ENCODE measurements at regions of chr15 and their contacts with region 1.

Region 1: GRCh38 chr15:76139368-76140073 is 79.7 kb downstream of the TMEM266 start:
- H3K4me3 ChIP-seq: no peak overlapping the region
- H3K27ac ChIP-seq: no peak overlapping the region
- H3K4me1 ChIP-seq: no peaks in the 10 kb centered on the region
- CTCF ChIP-seq: peak; percentile 65

Region 2: DNA sequence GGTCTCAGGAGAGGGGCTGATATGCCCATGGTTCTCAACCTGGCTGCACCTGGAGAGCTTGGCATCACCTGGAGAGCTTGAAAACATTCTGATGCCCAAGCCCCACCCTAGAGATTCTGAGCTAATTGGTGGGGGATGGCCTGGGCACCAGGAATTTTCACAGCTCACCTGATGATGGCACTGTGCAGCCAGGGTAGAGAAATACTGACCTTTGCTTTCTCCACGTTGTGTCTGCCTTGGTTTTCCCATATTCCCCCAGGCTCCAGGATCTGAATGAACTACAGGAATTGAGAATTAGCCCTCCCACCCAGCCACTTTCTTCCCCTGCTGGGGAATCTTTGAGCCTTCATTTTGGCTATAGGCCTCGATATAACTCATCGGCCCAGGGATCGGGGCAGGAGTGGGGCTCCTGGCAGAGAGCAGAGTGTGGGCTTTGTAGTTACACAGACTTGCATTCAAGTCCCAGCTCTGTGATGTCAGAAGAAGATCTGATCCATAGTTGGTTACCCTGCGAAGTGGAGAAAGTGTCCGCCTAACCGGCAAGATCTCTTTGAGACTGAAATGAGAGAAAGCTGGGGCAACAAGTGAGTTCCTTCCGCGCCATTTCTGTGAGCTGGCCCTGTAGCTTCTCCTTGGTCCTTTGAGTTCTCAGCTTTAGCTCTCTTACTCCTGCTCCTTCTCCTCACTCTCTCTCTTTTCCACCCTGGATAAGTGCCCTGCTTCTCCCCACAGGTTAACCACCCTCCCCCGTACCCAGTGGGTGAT is 329.4 kb before region 1 on chr15:
- CTCF ChIA-PET with region 1: interaction called, 48 read pairs
- POLR2A ChIA-PET with region 1: interaction called, 3 read pairs
- H3K4me3 ChIP-seq: no peak overlapping the region
- H3K27ac ChIP-seq: no peak overlapping the region
- H3K4me1 ChIP-seq: no peaks in the 10 kb centered on the region
- CTCF ChIP-seq: peak; percentile 42; the same call in 1 of the 2 replicates

Region 3: GRCh38 chr15:76057332-76058000 is 82.1 kb before region 1 on chr15:
- CTCF ChIA-PET with region 1: interaction called, 261 read pairs
- POLR2A ChIA-PET with region 1: interaction called, 18 read pairs
- H3K4me3 ChIP-seq: peak overlapping the region; percentile 16
- H3K27ac ChIP-seq: no peak overlapping the region
- H3K4me1 ChIP-seq: no peaks in the 10 kb centered on the region
- CTCF ChIP-seq: no peak

Region 4: DNA sequence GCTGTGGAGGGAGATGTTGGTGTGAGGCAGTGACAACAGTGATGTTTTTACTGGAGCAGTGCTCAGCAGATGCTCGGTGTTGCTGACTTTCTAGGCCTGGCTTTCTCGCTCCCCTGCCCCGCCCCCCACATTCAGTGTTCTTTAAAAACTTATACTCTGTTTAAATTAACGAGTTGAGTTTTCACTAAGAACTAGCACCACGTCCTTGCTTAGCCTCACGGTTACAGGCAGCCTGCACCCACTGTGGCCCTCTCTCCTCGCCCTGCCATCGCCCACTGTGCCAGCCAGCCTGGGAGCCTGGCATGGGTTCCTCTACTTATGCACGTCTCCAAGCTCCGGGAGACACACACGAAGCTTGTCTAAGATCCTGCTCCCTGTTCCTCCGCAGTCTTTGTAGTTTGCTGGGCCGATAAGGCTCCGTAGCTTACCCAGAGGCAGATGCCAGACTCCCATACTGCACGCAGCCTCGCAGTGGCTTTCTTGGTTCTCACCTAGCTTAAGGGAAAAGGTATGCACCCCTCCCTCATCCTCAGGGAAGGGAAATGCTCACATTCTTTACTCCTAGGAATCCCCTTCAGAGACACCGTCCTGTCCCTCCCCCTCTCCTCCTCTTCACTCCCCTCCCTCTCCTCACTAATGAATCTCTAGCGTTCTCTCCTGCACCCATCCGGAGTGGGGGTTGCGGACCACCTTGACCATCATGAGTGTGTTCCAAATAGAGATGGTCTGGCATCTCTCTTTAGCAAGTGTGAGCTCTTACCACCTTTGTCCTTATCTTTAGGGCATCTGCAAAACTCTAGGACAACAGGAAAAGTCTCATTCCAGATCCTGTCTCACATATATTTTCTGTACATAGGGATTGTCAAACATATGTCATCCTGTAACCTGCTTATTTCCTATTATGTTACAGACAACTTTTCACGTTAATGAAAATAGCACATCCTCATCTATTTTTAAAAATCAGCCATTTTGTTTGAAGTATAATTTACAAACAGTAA is 23.3 kb before region 1 on chr15:
- CTCF ChIA-PET with region 1: interaction called, 35 read pairs
- POLR2A ChIA-PET with region 1: no interaction called
- H3K4me3 ChIP-seq: no peak overlapping the region
- H3K27ac ChIP-seq: no peak overlapping the region
- H3K4me1 ChIP-seq: no peaks in the 10 kb centered on the region
- CTCF ChIP-seq: no peak

Region 5: DNA sequence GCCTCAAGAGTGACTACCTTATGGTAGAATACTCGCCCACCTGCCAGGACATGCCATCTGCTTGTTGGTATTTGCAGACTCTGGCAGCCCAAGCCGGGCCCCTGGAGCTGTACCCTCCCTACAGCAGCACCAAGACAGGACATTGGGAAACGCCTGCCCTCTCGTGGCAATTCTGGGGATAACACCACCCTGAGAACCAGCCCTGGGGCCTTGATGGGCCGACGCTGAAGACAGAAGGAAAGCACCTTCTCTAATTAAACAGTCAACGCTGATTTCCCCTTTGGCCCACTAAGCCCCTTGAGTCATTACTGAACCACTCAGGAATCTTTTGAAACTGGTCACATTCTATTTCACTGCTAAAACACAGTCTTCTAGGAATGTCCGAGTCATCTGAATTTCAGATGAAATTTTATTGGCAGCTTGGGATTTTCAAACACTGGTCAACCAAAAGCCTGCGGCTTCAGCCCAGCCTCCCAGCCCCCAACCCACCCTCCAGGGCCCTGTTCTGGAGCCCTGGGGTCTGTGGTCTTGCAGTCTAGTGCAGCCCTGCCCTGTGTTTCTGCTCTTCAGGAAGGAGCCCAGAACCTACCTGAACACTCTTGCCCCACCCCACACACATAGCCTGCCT is 11.6 kb after region 1 on chr15:
- CTCF ChIA-PET with region 1: interaction called, 91 read pairs
- POLR2A ChIA-PET with region 1: no interaction called
- H3K4me3 ChIP-seq: no peak overlapping the region
- H3K27ac ChIP-seq: no peak overlapping the region
- H3K4me1 ChIP-seq: peaks cover 3% of the 10 kb centered on the region; the same call in 1 of the 2 replicates
- CTCF ChIP-seq: peak; percentile 57; the same call in 1 of the 2 replicates